Heart right ventricle (tissue), 16 donors: ENCODE measurements at regions of chr9 and their contacts with region 1.

Region 1: DNA sequence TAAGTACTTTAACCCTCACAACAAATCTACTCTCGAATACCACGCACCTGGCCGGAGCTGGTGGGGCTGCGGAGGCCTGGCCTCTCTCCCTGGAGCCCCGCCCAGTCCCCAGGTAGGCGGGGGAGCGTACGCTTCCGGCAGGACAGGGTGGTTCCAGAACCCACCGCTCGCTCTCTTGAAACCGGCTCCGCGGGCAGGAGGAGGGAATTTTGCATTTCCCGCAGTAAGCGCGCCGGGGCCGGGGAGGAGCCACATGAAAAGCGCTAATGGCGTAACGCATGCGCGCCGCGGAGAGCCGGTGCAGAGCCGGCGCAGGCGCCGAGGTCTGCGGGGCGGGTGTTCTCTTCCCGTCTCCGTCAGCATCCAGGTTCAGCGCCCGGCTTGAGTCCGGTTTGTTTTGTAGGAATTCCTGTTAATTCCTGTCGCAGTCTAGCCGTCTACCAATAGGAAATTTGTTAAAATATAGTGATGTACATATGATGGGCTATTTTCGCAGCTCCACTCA is 20.8 kb downstream of the CAVIN4 start:
- DNase-seq: peak; percentile 75 to 86
- ATAC-seq: peak; percentile 77 to 89 (median 86)
- H3K4me3 ChIP-seq: peak overlapping the region; percentile 31 to 63 (median 54)
- H3K27ac ChIP-seq: peak overlapping the region in 2 of 10 donors; percentile 7 to 15
- H3K4me1 ChIP-seq: peaks cover 0 to 20% (median 16%) of the 10 kb centered on the region in 9 donors
- H3K27me3 ChIP-seq: peaks cover 0 to 3% (median 0%) of the 10 kb centered on the region in 7 donors
- CTCF ChIP-seq: no peak

Region 2: DNA sequence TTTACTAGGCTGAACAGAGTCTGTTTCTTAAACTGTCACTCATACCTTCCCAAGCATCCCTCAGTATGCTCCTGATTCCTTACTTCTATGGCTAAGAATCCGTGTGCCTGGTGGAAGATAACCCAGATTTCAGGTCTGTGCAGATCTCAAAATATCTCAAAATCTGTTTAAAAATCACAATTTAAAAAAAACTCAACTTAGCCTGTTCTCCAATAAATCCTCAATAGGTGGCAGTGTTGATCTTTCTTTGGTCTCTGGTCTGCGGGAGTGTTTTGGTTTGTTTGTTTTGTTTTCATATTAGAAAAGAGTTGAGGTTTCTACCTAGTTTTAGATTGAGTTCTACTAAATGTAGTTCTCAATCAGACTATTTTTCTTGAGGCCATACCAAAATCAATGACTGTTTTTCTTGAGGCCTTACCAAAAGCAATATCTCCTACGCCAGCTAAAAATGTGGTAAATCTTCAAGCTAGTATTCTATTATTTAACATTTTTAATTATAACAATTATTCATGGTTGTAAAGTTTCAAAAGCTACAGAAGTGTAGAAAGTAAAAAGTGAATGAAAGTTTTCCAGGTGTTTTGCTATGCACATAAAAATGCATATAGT is 1435.8 kb before region 1 on chr9:
- intact Hi-C with region 1: no loop called
- DNase-seq: no peak
- ATAC-seq: no peak
- H3K4me3 ChIP-seq: no peak overlapping the region
- H3K27ac ChIP-seq: no peak overlapping the region
- H3K4me1 ChIP-seq: peaks cover 0 to 5% (median 0%) of the 10 kb centered on the region in 9 donors
- H3K27me3 ChIP-seq: peaks cover 0 to 1% (median 0%) of the 10 kb centered on the region in 7 donors
- CTCF ChIP-seq: peak; percentile 12 to 76 (median 61)

Region 3: GRCh38 chr9:99173570-99174504 is 1424.9 kb before region 1 on chr9:
- intact Hi-C with region 1: loop called in 1 of 10 experiments (anchors 10 kb)
- DNase-seq: no peak
- ATAC-seq: no peak
- H3K4me3 ChIP-seq: no peak overlapping the region
- H3K27ac ChIP-seq: no peak overlapping the region
- H3K4me1 ChIP-seq: no peaks in the 10 kb centered on the region
- H3K27me3 ChIP-seq: peaks cover 0 to 15% (median 0%) of the 10 kb centered on the region in 7 donors
- CTCF ChIP-seq: no peak

Region 4: GRCh38 chr9:100322954-100323536 is 275.6 kb before region 1 on chr9:
- intact Hi-C with region 1: loop called in 4 of 10 experiments (anchors 5 to 10 kb)
- DNase-seq: no peak
- ATAC-seq: peak in 1 of 8 donors; percentile 29
- H3K4me3 ChIP-seq: no peak overlapping the region
- H3K27ac ChIP-seq: no peak overlapping the region
- H3K4me1 ChIP-seq: peaks cover 0 to 5% (median 0%) of the 10 kb centered on the region in 9 donors
- H3K27me3 ChIP-seq: no peaks in the 10 kb centered on the region
- CTCF ChIP-seq: peak; percentile 43 to 74 (median 67)

Region 5: GRCh38 chr9:100437860-100438805 is 160.6 kb before region 1 on chr9:
- intact Hi-C with region 1: loop called in 4 of 10 experiments (anchors 5 to 10 kb)
- DNase-seq: peak; percentile 22 to 74
- ATAC-seq: peak in 5 of 8 donors; percentile 37 to 78 (median 55)
- H3K4me3 ChIP-seq: no peak overlapping the region
- H3K27ac ChIP-seq: no peak overlapping the region
- H3K4me1 ChIP-seq: peaks cover 0 to 6% (median 0%) of the 10 kb centered on the region in 9 donors
- H3K27me3 ChIP-seq: no peaks in the 10 kb centered on the region
- CTCF ChIP-seq: peak; percentile 90 to 99 (median 94)

Region 6: GRCh38 chr9:100499866-100500265 is 98.8 kb before region 1 on chr9:
- intact Hi-C with region 1: loop called (anchors 1 to 10 kb)
- DNase-seq: no peak
- ATAC-seq: no peak
- H3K4me3 ChIP-seq: no peak overlapping the region
- H3K27ac ChIP-seq: no peak overlapping the region
- H3K4me1 ChIP-seq: no peaks in the 10 kb centered on the region
- H3K27me3 ChIP-seq: no peaks in the 10 kb centered on the region
- CTCF ChIP-seq: no peak

Region 7: GRCh38 chr9:100540327-100540726 is 58.4 kb before region 1 on chr9:
- intact Hi-C with region 1: no loop called
- DNase-seq: no peak
- ATAC-seq: no peak
- H3K4me3 ChIP-seq: no peak overlapping the region
- H3K27ac ChIP-seq: no peak overlapping the region
- H3K4me1 ChIP-seq: no peaks in the 10 kb centered on the region
- H3K27me3 ChIP-seq: no peaks in the 10 kb centered on the region
- CTCF ChIP-seq: no peak

Region 8: GRCh38 chr9:100989731-100990130 is 391.0 kb after region 1 on chr9:
- intact Hi-C with region 1: no loop called
- DNase-seq: no peak
- ATAC-seq: no peak
- H3K4me3 ChIP-seq: no peak overlapping the region
- H3K27ac ChIP-seq: no peak overlapping the region
- H3K4me1 ChIP-seq: no peaks in the 10 kb centered on the region
- H3K27me3 ChIP-seq: no peaks in the 10 kb centered on the region
- CTCF ChIP-seq: no peak

Region 9: GRCh38 chr9:101014285-101014965 is 415.7 kb after region 1 on chr9:
- intact Hi-C with region 1: no loop called
- DNase-seq: no peak
- ATAC-seq: no peak
- H3K4me3 ChIP-seq: no peak overlapping the region
- H3K27ac ChIP-seq: no peak overlapping the region
- H3K4me1 ChIP-seq: no peaks in the 10 kb centered on the region
- H3K27me3 ChIP-seq: no peaks in the 10 kb centered on the region
- CTCF ChIP-seq: no peak

Region 10: DNA sequence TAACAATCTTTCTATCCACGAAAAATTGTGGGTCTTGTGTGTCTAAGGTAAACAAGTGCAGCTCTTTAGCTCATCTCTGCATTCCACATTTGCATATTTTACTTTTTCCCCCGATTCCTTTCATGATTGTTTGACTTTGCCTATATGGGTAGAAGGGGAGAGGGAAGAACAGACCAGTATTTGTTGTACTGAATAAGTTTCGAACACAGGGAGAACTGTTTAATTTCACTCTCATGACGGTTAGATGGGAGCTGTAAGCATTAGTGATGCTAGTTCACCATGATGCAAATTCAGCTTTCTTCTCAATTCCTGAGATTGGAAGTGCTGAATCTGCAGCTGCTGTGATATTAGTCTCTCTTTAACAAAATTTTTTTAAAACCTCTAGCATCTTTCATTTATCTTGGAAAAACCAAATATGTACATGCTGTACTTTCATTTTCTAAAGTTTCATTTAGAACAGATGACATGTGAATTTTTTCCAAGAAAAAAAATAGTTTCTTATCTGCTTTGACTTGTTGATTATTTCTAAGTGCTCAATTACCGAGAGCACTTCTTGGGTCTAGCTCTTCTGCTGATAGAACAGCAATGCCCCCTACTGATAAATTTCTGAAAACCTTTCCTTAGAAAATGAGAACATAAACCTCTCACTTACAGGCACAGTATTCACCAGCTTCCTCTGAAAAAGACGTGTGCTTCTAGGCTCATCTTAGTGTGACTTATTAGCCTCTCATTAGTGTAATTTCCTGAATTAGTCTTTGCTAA is 636.6 kb after region 1 on chr9:
- intact Hi-C with region 1: loop called in 3 of 10 experiments (anchors 5 to 10 kb)
- DNase-seq: no peak
- ATAC-seq: no peak
- H3K4me3 ChIP-seq: no peak overlapping the region
- H3K27ac ChIP-seq: no peak overlapping the region
- H3K4me1 ChIP-seq: no peaks in the 10 kb centered on the region
- H3K27me3 ChIP-seq: peaks cover 0 to 6% (median 0%) of the 10 kb centered on the region in 7 donors
- CTCF ChIP-seq: peak; percentile 29 to 75 (median 54)